Activated B cell treated with CpG ODN at 0.5 μM for 24 hours (primary cell): ENCODE measurements at regions of chr10 and their contacts with region 1.

Region 1: GRCh38 chr10:42782446-42783180 is at the start of gene BMS1:
- DNase-seq: peak; percentile 84
- ATAC-seq: peak; percentile 88
- H3K4me3 Mint-ChIP-seq: peak within 1 kb of the TSS; percentile 98
- H3K27ac Mint-ChIP-seq: peak within 1 kb of the TSS; percentile 89
- H3K4me1 Mint-ChIP-seq: peaks cover 21% of the 10 kb centered on the region
- H3K27me3 Mint-ChIP-seq: peaks cover 7% of the 10 kb centered on the region
- CTCF ChIP-seq: no peak
- total RNA-seq, gene BMS1: 24.6 and 25.1 TPM in 2 replicates

Region 2: DNA sequence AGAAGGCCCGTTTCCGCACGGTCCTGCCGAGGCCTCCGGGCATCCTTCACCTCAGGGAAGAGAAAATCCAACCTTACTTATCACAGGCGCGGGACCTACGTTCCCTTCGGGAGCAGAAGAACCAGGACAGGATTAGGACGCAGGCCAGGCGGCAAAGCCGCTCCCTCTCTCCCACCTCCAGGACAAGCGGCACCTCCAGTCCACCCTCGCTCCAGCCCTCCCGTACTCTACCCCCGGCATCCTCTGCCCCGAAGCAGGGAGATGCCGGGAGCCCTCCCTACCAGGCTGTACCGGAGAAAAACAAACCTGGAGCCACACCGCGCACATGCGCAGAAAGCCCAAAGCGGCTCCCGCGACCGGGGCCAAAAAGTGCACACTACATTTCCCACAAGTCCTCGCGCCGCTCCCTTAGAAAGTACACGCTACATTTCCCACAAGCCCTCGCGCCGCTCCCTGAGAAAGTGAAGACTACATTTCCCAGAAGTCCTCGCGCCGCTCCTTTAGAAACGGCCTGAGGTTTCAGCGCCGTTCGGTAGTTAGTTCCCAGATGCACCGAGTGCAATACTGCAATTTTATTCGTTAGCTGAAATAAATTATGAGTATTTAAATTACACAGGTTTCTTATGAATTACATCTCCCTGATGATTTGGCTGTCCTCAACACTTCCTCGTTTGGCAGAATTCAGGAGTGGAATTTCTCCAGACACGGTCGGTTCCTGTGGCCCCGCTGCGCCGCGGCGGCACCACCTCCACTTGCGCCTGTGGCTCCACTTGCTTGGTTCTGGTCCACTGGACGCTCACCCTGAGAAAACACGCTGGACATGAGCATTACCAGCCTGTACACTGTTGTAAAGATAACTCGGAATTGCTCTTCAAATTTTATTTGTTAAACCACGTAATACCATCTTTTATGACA is 229.9 kb before region 1 on chr10:
- CTCF ChIA-PET with region 1: no interaction called
- POLR2A ChIA-PET with region 1: interaction called, 6 read pairs
- intact Hi-C with region 1: loop called (anchors 1 kb)
- DNase-seq: peak; percentile 85
- ATAC-seq: peak; percentile 97
- H3K4me3 Mint-ChIP-seq: peak overlapping the region; percentile 96
- H3K27ac Mint-ChIP-seq: peak overlapping the region; percentile 89
- H3K4me1 Mint-ChIP-seq: peaks cover 35% of the 10 kb centered on the region
- H3K27me3 Mint-ChIP-seq: no peaks in the 10 kb centered on the region
- CTCF ChIP-seq: no peak

Region 3: GRCh38 chr10:42753126-42753506 is 29.5 kb before region 1 on chr10:
- CTCF ChIA-PET with region 1: no interaction called
- POLR2A ChIA-PET with region 1: interaction called, 9 read pairs
- intact Hi-C with region 1: loop called (anchors 1 kb)
- DNase-seq: peak; percentile 46
- ATAC-seq: peak; percentile 45
- H3K4me3 Mint-ChIP-seq: peak overlapping the region; percentile 83
- H3K27ac Mint-ChIP-seq: no peak overlapping the region
- H3K4me1 Mint-ChIP-seq: peaks cover 14% of the 10 kb centered on the region
- H3K27me3 Mint-ChIP-seq: peaks cover 56% of the 10 kb centered on the region
- CTCF ChIP-seq: no peak

Region 4: DNA sequence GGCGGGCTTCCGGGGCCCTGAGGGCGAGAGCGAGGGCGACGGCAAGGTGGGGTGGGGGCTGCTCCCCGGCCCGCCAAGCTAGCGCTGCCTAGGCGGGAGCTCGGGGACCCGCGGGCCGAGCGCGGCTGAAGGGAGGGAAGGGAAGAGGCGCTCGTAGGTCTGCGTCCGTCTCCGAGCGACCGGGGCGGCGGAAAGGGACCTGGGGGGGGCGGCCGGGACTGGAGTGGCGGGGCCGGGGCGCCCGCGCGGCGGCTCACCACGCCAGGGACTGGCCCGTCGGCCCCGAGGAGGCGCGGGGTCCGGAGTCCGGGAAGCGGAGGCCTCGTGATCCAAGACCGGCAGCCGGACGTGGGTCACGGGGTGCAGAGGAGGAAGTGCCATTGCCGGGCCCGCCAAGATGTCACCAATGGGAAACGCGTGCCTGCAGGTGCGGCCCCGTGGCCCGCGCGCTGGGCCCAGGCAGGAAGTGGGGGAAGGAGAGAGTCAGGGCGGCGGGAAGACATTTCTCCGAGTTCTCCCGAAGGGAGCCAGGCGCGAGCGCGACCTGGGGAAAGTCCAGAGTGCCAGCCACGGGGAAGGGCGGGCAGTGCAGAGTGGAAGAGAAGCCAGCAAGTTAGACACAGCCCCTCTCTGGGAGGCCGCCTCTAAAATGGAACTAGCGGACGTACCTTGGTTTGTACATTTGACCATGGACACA is 614.5 kb after region 1 on chr10:
- CTCF ChIA-PET with region 1: no interaction called
- POLR2A ChIA-PET with region 1: no interaction called
- intact Hi-C with region 1: loop called (anchors 2 kb)
- DNase-seq: peak; percentile 77
- ATAC-seq: peak; percentile 79
- H3K4me3 Mint-ChIP-seq: peak overlapping the region; percentile 89
- H3K27ac Mint-ChIP-seq: peak overlapping the region; percentile 93
- H3K4me1 Mint-ChIP-seq: peaks cover 82% of the 10 kb centered on the region
- H3K27me3 Mint-ChIP-seq: no peaks in the 10 kb centered on the region
- CTCF ChIP-seq: no peak

Region 5: GRCh38 chr10:43574001-43574892 is 791.6 kb after region 1 on chr10 and contains the start of gene ZNF239:
- CTCF ChIA-PET with region 1: no interaction called
- POLR2A ChIA-PET with region 1: no interaction called
- intact Hi-C with region 1: loop called (anchors 2 kb)
- DNase-seq: peak; percentile 74
- ATAC-seq: peak; percentile 95
- H3K4me3 Mint-ChIP-seq: peak within 1 kb of the TSS; percentile 89
- H3K27ac Mint-ChIP-seq: peak within 1 kb of the TSS; percentile 83
- H3K4me1 Mint-ChIP-seq: peaks cover 48% of the 10 kb centered on the region
- H3K27me3 Mint-ChIP-seq: no peaks in the 10 kb centered on the region
- CTCF ChIP-seq: no peak
- total RNA-seq, gene ZNF239: 5.7 and 9.4 TPM in 2 replicates